Heart right ventricle (tissue), 16 donors: ENCODE measurements at regions of chr9 and their contacts with region 1.

Region 1: DNA sequence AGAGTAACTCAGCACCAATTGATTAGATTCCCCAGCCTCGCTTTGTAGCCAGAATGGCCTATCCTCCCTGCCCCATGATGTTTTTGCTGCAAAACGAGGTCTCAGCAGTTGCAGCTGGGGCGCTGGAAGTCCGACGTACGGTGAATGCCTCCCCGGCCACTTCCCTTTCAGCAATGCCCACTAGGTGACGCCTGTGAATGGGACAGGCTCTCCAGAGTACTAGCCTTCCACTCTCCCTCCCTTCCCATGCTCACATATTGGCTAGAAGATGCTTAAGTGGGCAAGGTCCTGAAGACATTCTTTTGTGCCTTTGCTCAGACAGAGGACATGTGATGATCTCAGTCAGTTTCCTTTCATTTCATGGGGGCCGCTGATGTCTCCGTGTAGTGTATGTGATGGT is 50.8 kb downstream of the DMRT2 start:
- DNase-seq: peak; percentile 24 to 41
- ATAC-seq: peak in 6 of 8 donors; percentile 58 to 94 (median 71)
- H3K4me3 ChIP-seq: no peak overlapping the region
- H3K27ac ChIP-seq: no peak overlapping the region
- H3K4me1 ChIP-seq: no peaks in the 10 kb centered on the region
- H3K27me3 ChIP-seq: peaks cover 0 to 14% (median 0%) of the 10 kb centered on the region in 7 donors
- CTCF ChIP-seq: peak; percentile 29 to 69 (median 59)

Region 2: GRCh38 chr9:1200847-1201251 is 99.9 kb after region 1 on chr9:
- intact Hi-C with region 1: loop called in 1 of 10 experiments (anchors 5 kb)
- DNase-seq: peak; percentile 27 to 35
- ATAC-seq: peak; percentile 46 to 96 (median 82)
- H3K4me3 ChIP-seq: no peak overlapping the region
- H3K27ac ChIP-seq: peak overlapping the region in 2 of 10 donors; percentile 63 to 67
- H3K4me1 ChIP-seq: peaks cover 0 to 7% (median 0%) of the 10 kb centered on the region in 9 donors
- H3K27me3 ChIP-seq: no peaks in the 10 kb centered on the region
- CTCF ChIP-seq: no peak

Region 3: GRCh38 chr9:1231998-1232919 is 131.3 kb after region 1 on chr9:
- intact Hi-C with region 1: no loop called
- DNase-seq: peak; percentile 15 to 31
- ATAC-seq: peak; percentile 44 to 90 (median 72)
- H3K4me3 ChIP-seq: no peak overlapping the region
- H3K27ac ChIP-seq: peak overlapping the region in 4 of 10 donors; percentile 2 to 44 (median 23)
- H3K4me1 ChIP-seq: peaks cover 0 to 7% (median 0%) of the 10 kb centered on the region in 9 donors
- H3K27me3 ChIP-seq: no peaks in the 10 kb centered on the region
- CTCF ChIP-seq: no peak

Region 4: DNA sequence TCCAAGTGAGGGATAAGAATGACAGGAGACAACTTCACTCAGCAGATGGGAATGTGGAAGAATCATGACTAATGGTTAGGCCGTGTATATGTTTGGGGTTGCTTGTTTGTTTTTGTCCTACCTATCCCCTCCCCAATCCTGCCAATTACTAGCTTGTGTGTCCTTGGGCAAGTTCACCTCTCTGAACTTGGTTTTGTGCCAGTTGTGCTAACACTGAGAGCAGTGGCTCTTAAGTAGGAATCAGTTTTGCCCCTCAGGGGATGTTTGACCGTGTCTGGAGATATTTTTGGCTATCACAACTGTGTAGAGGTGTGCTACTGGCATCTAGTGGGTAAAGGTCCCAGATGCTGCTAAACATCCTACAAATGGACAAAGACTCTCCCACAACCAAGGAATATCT is 236.2 kb after region 1 on chr9:
- intact Hi-C with region 1: loop called in 1 of 10 experiments (anchors 10 kb)
- DNase-seq: no peak
- ATAC-seq: peak in 1 of 8 donors; percentile 71
- H3K4me3 ChIP-seq: no peak overlapping the region
- H3K27ac ChIP-seq: no peak overlapping the region
- H3K4me1 ChIP-seq: no peaks in the 10 kb centered on the region
- H3K27me3 ChIP-seq: no peaks in the 10 kb centered on the region
- CTCF ChIP-seq: peak in 1 of 9 donors; percentile 15

Region 5: GRCh38 chr9:1429297-1429696 is 328.4 kb after region 1 on chr9:
- intact Hi-C with region 1: loop called in 3 of 10 experiments (anchors 5 to 10 kb)
- DNase-seq: peak in 1 of 2 donors; percentile 10
- ATAC-seq: peak in 3 of 8 donors; percentile 37 to 68 (median 61)
- H3K4me3 ChIP-seq: no peak overlapping the region
- H3K27ac ChIP-seq: no peak overlapping the region
- H3K4me1 ChIP-seq: no peaks in the 10 kb centered on the region
- H3K27me3 ChIP-seq: no peaks in the 10 kb centered on the region
- CTCF ChIP-seq: peak in 7 of 9 donors; percentile 39 to 53 (median 42)

Region 6: GRCh38 chr9:1490341-1491232 is 389.6 kb after region 1 on chr9:
- intact Hi-C with region 1: no loop called
- DNase-seq: no peak
- ATAC-seq: no peak
- H3K4me3 ChIP-seq: no peak overlapping the region
- H3K27ac ChIP-seq: no peak overlapping the region
- H3K4me1 ChIP-seq: no peaks in the 10 kb centered on the region
- H3K27me3 ChIP-seq: no peaks in the 10 kb centered on the region
- CTCF ChIP-seq: no peak

Region 7: DNA sequence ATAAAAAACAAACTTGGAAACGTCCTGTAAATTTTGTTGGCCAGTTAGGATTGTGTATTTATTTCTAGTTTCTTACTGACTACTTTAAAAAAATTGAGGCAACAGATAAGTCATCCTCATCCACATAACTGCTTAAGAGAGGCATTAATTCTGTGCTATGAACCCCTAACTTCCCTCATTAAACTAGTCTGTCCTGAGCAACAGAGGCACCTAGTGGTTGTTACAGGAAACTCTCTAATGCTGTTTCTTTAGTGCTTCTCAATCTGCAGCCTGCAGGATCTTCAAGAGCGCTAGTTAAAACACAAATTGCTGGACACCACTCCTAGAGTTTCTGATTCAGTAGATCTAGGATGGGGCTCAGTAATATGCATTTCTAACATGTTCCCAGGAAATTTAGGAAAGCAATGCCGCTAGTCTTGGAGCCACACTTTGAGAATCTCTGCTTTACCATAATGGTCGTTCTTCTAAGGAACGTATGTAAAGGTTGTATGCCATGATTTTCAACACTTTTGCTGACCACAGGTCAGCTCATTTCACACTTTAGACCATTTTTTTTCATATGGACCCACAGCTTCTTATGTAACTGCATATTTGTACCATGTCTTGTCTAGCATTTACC is 504.1 kb after region 1 on chr9:
- intact Hi-C with region 1: loop called in 1 of 10 experiments (anchors 5 kb)
- DNase-seq: no peak
- ATAC-seq: no peak
- H3K4me3 ChIP-seq: no peak overlapping the region
- H3K27ac ChIP-seq: no peak overlapping the region
- H3K4me1 ChIP-seq: no peaks in the 10 kb centered on the region
- H3K27me3 ChIP-seq: peaks cover 0 to 11% (median 0%) of the 10 kb centered on the region in 7 donors
- CTCF ChIP-seq: peak in 8 of 9 donors; percentile 11 to 41 (median 32)